Activated B cell treated with CpG ODN at 0.5 μM for 24 hours (primary cell): ENCODE measurements at regions of chr16 and their contacts with region 1.

Region 1: DNA sequence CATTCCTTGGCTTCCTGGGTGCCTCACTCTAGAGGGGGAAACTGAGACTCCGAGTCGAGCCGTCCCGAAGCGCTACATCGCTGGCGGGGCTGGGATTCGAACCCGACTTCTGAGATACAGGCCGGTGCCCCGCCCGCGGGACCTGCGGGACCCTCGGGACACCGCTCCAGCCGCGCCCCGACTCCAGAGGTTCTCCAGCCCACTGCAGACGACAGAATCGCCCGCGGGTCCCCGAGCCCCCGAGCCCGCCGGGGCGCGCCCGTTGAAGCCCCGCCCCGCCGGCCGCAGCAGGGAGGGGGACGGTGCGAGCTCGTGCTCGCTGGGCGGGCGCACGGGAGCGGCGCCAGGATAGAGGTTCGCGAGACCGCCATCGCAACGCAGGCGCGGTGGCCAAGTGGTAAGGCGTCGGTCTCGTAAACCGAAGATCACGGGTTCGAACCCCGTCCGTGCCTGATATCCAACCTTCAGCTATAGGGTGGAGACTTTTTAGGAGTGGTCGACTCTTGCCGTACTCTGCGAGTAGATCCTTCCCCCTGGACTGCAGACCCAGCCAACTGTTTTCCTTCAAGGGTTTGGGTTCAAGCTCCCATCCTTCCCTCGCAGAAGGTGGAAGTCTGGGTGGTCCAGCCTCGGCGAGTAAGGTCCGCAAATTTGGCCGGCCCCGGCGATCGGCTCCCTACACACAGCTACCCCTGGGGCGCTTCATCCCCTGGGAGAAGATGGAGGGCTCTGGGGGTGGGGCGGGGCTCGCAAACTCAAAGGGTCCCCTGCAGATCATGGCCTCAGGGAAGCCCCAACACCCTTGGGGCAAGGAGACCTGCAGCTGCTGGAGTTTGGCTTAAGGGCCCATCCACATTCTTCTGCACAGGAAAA is 214.6 kb downstream of the MRTFB start:
- DNase-seq: peak; percentile 98
- ATAC-seq: peak; percentile 79
- H3K4me3 Mint-ChIP-seq: peak overlapping the region; percentile 92
- H3K27ac Mint-ChIP-seq: peak overlapping the region; percentile 87
- H3K4me1 Mint-ChIP-seq: peaks cover 23% of the 10 kb centered on the region
- H3K27me3 Mint-ChIP-seq: peaks cover 2% of the 10 kb centered on the region
- CTCF ChIP-seq: no peak

Region 2: DNA sequence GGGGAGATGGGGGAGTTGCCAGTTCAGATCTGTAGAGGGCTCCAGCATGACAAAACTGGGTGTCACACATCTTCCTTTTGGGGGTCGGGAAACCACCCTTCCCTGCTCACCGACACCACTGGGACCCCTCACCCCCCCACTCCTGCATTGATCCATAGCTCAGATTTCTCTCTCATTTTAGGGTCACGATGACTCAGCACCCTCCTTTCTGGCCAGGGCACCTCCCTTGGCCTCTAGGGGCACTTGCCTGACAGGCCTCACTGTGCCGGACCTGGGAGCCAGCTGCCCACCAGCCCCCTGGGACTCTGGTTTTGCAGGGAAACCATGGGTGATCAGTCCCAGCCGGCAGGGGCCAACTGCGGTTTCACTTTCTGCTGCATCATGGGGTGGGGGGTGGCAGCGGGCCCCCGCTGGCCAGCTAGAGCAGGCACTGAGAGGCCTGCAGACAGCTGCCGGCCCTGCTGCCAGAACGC is 24.8 kb after region 1 on chr16:
- CTCF ChIA-PET with region 1: interaction called, 3 read pairs
- POLR2A ChIA-PET with region 1: interaction called, 12 read pairs
- intact Hi-C with region 1: no loop called
- DNase-seq: no peak
- ATAC-seq: peak; percentile 64
- H3K4me3 Mint-ChIP-seq: peak overlapping the region; percentile 67
- H3K27ac Mint-ChIP-seq: no peak overlapping the region
- H3K4me1 Mint-ChIP-seq: peaks cover 25% of the 10 kb centered on the region
- H3K27me3 Mint-ChIP-seq: peaks cover 2% of the 10 kb centered on the region
- CTCF ChIP-seq: no peak

Region 3: DNA sequence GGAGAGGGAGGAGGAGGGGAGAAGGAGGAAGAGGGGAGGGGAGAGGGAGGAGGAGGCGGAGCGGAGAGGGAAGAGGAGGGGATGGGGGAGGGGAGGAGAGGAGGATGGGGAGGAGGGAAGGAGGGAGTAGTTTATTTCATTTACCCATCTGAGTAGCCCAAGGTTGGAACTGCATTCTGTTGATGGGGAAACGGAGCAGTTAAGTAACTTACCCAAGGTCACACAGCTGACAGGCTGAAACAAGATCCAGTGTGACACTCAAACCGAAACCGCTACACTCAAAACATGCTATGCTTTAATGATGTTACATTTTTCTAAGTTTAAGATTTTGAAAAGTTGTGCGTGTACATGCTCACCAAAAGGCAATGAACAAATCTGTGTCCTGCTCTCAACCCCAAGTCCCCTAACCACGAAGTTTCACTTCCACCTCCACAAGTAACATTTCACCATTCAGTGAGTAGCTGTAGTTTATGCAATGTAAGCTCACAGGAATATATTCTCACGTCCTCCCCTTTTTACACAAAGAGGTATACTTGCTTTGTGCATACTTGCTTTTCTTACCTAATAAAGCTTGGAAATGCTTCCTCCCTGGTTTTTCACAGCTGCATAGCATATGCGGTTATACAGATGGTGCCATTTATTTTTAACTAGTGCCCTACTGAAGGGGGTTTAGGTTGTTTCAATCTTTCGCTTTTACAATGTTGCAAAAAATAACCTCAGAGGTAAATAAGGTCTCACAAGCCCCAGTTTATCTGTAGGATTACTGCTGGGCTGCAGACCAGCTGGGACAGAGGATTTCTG is 69.0 kb after region 1 on chr16:
- CTCF ChIA-PET with region 1: no interaction called
- POLR2A ChIA-PET with region 1: interaction called, 10 read pairs
- intact Hi-C with region 1: loop called (anchors 1 kb)
- DNase-seq: no peak
- ATAC-seq: peak; percentile 93
- H3K4me3 Mint-ChIP-seq: peak overlapping the region; percentile 59
- H3K27ac Mint-ChIP-seq: peak overlapping the region; percentile 64
- H3K4me1 Mint-ChIP-seq: peaks cover 32% of the 10 kb centered on the region
- H3K27me3 Mint-ChIP-seq: peaks cover 2% of the 10 kb centered on the region
- CTCF ChIP-seq: no peak

Region 4: DNA sequence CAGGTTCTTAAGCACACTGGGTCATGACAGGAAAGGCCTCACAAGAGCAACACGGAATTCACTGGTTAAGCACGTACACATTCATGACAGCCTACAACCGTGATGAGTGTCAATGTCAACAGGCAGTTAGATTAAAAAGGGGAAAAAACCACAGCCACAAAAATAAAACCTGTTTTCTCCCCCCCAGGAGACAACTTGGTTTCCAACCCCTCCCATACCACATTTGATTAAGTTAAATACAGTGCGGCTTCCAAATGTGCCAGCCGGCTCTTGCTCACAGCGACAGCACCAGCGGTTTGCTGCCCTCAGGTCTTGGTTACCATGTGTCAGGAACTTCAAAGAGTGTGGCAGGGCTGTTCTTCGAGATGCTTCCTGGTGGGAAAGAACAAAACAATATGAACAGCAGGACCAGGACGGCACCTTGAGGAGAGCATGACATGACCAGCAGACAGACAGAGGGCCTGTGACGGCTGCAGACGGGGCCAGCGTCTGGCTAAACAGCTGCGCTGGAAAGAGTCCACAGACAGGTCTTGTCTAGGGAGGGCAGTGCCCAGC is 150.7 kb after region 1 on chr16:
- CTCF ChIA-PET with region 1: no interaction called
- POLR2A ChIA-PET with region 1: no interaction called
- intact Hi-C with region 1: no loop called
- DNase-seq: no peak
- ATAC-seq: no peak
- H3K4me3 Mint-ChIP-seq: no peak overlapping the region
- H3K27ac Mint-ChIP-seq: no peak overlapping the region
- H3K4me1 Mint-ChIP-seq: no peaks in the 10 kb centered on the region
- H3K27me3 Mint-ChIP-seq: no peaks in the 10 kb centered on the region
- CTCF ChIP-seq: no peak

Region 5: DNA sequence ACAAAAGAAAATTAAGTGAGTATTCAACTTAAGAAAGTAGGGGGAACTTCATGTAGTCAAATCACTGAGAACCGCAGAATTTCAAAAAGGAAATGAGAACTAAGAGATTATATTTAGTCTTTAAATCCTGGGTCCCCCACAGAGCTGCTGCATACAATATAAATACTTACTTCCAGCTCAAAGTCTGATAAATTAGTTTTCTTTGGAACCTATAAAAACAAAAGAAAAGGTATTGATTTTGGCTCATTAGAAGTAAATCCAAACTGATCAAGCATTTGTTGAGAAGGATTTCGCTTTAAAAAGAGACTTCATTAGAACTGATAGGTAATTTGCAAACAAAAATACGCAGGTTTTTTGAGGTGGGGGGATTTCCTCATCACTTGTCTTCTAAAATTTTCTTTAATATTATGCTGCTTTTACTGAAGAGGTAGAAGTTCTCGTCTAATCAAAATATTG is 322.4 kb after region 1 on chr16:
- CTCF ChIA-PET with region 1: no interaction called
- POLR2A ChIA-PET with region 1: interaction called, 6 read pairs
- intact Hi-C with region 1: loop called (anchors 5 kb)
- DNase-seq: no peak
- ATAC-seq: peak; percentile 70
- H3K4me3 Mint-ChIP-seq: peak overlapping the region; percentile 67
- H3K27ac Mint-ChIP-seq: peak overlapping the region; percentile 77
- H3K4me1 Mint-ChIP-seq: peaks cover 44% of the 10 kb centered on the region
- H3K27me3 Mint-ChIP-seq: no peaks in the 10 kb centered on the region
- CTCF ChIP-seq: no peak

Region 6: GRCh38 chr16:14632692-14633569 is 347.2 kb after region 1 on chr16 and contains the start of gene BFAR:
- CTCF ChIA-PET with region 1: no interaction called
- POLR2A ChIA-PET with region 1: interaction called, 17 read pairs
- intact Hi-C with region 1: loop called (anchors 1 kb)
- DNase-seq: peak; percentile 99
- ATAC-seq: peak; percentile 77
- H3K4me3 Mint-ChIP-seq: peak within 1 kb of the TSS; percentile 100
- H3K27ac Mint-ChIP-seq: peak within 1 kb of the TSS; percentile 97
- H3K4me1 Mint-ChIP-seq: peaks cover 64% of the 10 kb centered on the region
- H3K27me3 Mint-ChIP-seq: no peaks in the 10 kb centered on the region
- CTCF ChIP-seq: no peak
- total RNA-seq, gene BFAR: 54.9 and 68.2 TPM in 2 replicates